AG04449 (cell line): ENCODE measurements at regions of chr11 and their contacts with region 1.

Region 1: GRCh38 chr11:112074026-112074811 is at the start of gene NKAPD1:
- DNase-seq: peak; percentile 51
- H3K4me3 ChIP-seq: peak within 1 kb of the TSS; percentile 97
- CTCF ChIP-seq: no peak

Region 2: GRCh38 chr11:111707039-111707690 is 367.1 kb before region 1 on chr11:
- CTCF ChIA-PET with region 1: no interaction called
- POLR2A ChIA-PET with region 1: no interaction called
- DNase-seq: no peak
- H3K4me3 ChIP-seq: no peak overlapping the region
- CTCF ChIP-seq: no peak

Region 3: DNA sequence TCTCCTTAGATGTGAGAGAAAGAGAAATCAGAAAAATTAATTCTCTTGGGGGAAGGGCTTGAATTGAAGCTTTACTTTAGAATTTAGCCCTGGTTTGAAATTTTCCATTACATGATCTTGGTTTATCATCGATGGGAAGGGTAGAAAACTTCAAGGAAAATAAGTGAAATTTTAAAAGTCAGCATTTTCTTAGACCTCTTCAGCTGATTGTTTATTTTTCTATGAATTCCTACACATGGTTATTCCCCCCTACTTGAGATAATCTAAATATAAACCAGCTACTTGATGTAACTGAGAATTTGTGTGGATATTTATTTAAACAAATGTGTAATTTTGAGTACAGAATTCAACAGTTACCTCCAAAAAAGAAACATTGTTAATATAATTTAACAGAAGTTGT is 11.3 kb before region 1 on chr11:
- CTCF ChIA-PET with region 1: no interaction called
- POLR2A ChIA-PET with region 1: no interaction called
- DNase-seq: no peak
- H3K4me3 ChIP-seq: no peak overlapping the region
- CTCF ChIP-seq: no peak

Region 4: DNA sequence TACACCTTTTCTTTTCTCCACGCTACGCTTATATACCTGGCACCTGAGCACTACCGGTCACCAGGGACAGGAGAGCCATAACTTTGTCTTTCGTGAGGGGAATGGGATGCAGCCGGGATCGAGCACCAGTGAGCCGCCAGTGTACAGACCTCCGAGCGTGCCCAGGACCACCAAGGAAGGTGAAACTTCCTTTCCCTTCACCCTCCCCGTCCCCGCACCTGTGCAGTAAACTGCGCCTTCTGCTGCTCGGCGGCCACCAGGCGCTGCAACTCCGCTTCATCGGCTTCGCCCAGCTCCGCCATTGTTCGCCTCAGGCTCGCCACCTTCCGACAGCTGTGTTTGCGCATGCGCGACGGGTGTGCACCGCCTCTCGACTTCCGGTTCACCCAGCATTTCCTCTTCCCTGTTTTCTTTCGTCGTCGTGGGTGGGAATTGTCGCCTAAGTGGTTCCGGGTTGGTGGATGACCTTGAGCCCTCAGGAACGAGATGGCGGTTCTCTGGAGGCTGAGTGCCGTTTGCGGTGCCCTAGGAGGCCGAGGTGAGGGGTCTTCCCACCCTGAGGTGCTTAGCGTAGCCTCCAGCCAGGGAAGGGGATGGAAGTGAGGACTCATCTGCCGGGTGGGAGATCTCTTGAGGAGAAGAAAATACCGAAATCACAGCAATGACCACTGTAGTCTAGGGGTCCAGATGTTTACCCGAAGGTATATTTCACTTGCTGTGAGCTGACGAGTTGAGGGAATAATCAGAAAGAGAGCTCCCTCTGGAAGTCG is 12.4 kb after region 1 on chr11 and contains the starts of genes SDHD and TIMM8B:
- CTCF ChIA-PET with region 1: interaction called, 13 read pairs
- POLR2A ChIA-PET with region 1: interaction called, 4 read pairs
- DNase-seq: peak; percentile 50
- H3K4me3 ChIP-seq: peak within 1 kb of the TSS; percentile 95
- CTCF ChIP-seq: peak; percentile 69